ENCODE measurements at regions of chr17 and their contacts with region 1.

Region 1: GRCh38 chr17:39199820-39200069 is 338 bp upstream of the RPL19 start:
- DNase-seq: peak; percentile 96

Region 2: DNA sequence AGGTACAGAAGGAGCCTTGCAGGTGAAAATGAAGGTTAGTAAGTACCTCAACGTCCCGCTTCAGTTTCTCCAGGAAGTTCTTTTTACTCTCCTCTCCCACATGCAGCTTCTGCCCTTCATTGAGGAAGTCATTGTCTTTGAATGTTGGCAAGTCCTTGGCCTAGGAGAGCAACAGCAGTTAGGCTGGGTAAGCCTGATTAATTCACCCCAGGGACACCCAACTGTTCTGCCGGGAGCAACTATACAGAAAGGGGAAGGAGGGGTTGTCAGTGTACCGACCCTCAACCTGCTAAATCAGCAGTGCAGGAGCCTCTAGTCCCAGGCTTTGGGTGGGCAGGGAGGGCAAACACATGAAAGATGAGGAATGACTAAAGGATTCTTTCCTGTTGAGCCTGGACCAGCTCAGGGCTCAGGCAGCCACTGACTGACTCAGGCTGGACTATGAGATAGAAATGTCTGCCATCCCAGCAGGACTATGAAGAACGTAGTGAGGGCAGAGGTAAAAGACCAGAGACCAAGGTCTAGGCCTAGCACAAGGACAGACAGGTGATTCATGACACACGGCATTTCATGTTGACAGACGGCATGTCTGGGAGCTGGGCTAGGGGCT is 422.0 kb before region 1 on chr17:
- intact Hi-C with region 1: loop called in 1 of 2 experiments (anchors 10 kb)
- DNase-seq: no peak

Region 3: GRCh38 chr17:39069114-39069756 is 130.5 kb before region 1 on chr17:
- intact Hi-C with region 1: no loop called
- DNase-seq: peak; percentile 22

Region 4: GRCh38 chr17:39244600-39245570 is 45.1 kb after region 1 on chr17:
- intact Hi-C with region 1: loop called (anchors 5 kb)
- DNase-seq: peak; percentile 94

Region 5: GRCh38 chr17:39393736-39394135 is 194.0 kb after region 1 on chr17:
- intact Hi-C with region 1: no loop called
- DNase-seq: no peak